ENCODE measurements at regions of chr6 and their contacts with region 1.

Region 1: DNA sequence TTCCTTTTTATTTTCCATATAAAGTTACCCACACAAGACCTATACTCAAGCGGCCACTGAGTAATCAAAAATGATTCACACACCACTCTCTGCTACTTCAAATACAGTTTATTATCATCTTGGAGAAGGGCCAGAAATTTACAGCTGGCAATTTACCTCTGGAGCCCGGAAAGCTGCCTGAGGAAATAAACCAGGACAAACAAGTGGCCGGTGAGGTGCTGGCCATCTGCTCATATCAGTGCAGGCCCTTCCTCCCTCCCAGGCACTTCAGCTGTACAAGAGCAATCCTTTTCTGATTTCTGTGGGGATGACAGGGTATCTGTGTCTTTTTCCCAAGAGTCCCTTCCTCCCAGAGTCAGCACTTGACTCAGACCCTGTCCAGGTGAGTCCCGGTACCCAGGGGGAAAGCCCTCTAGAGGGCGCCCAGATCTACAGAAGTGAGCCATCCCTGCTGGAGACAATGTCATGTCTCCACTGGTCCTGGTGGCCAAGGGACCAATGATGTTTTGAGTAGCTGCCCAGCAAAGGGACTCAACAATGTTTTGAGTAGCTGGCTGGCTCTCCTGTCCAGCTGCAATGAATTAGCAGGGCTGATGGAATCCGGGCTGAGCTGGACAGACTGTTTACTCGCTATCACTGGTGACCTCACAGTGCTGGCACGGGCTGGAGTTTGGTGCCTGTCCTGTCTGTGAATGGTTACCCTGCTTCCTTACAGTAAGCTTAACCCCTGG is 23.6 kb downstream of the LRP11 start:
- DNase-seq: peak; percentile 92
- ATAC-seq: peak; percentile 87
- H3K4me3 ChIP-seq: no peak overlapping the region
- H3K27ac ChIP-seq: peak overlapping the region; percentile 20
- H3K4me1 ChIP-seq: peaks cover 20% of the 10 kb centered on the region
- H3K27me3 ChIP-seq: no peaks in the 10 kb centered on the region
- CTCF ChIP-seq: peak; percentile 49
- POLR2A ChIP-seq: no peak
- RAD21 ChIP-seq: peak; percentile 38

Region 2: DNA sequence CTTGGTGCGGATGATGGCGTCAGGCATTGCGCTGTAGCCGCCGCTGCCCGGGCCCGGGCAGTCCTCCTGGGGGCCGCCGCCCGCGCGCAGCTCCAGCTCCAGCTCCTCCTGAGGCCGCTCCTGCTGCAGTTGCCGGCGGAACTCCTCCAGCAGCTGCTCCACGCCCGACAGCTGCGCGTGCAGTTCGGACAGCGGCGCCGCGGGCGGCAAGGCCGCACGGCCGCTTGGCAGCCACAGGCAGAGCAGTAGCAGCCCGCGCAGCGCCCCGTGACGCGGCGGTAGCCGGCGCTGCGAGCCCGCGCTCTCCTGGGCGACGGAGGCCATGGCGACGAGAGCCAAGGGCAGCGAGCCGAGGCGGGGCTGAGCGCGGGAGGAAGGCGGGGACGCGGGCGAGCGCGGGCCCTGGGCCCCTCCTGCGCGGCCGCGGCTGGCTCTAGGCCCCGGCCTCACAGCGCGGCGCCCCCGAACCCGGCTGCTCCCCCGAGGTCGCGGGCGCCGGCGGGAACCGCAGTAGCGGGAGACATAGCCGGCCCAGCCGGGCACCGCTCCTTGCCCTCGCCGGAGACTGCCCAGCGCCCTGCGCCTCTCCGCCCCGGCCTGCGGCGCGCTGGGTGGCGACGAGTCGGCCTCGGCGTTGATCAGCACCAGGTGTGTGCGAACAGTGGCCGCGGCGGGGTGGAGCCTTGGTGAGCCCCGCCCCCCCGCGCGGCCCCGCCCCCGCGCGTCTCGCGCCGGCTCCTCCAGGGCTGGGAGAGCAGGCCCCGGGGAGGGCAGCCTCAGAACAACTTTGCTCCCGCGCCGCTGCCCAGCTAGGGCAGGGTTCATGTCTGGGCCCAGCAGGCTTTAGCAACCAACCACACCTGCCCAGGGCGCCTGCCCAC is 23.4 kb after region 1 on chr6 and contains the start of gene LRP11:
- CTCF ChIA-PET with region 1: interaction called, 7 read pairs
- POLR2A ChIA-PET with region 1: no interaction called
- dilution Hi-C with region 1: no loop called
- in situ Hi-C with region 1: no loop called
- intact Hi-C with region 1: loop called (anchors 1 kb)
- DNase-seq: peak; percentile 74
- ATAC-seq: peak; percentile 81
- H3K4me3 ChIP-seq: peak within 1 kb of the TSS; percentile 54
- H3K27ac ChIP-seq: peak within 1 kb of the TSS; percentile 89
- H3K4me1 ChIP-seq: peaks cover 24% of the 10 kb centered on the region
- H3K27me3 ChIP-seq: no peaks in the 10 kb centered on the region
- CTCF ChIP-seq: 0 out of 2 replicates have a peak, but pooled peaks have one; percentile 3
- POLR2A ChIP-seq: peak; percentile 59
- RAD21 ChIP-seq: peak; percentile 1; the same call in 1 of the 2 replicates
- total RNA-seq, gene LRP11: 63.8 and 74.7 TPM in 2 replicates